Activated B cell treated with CpG ODN at 0.5 μM for 24 hours (primary cell): ENCODE measurements at regions of chr1 and their contacts with region 1.

Region 1: DNA sequence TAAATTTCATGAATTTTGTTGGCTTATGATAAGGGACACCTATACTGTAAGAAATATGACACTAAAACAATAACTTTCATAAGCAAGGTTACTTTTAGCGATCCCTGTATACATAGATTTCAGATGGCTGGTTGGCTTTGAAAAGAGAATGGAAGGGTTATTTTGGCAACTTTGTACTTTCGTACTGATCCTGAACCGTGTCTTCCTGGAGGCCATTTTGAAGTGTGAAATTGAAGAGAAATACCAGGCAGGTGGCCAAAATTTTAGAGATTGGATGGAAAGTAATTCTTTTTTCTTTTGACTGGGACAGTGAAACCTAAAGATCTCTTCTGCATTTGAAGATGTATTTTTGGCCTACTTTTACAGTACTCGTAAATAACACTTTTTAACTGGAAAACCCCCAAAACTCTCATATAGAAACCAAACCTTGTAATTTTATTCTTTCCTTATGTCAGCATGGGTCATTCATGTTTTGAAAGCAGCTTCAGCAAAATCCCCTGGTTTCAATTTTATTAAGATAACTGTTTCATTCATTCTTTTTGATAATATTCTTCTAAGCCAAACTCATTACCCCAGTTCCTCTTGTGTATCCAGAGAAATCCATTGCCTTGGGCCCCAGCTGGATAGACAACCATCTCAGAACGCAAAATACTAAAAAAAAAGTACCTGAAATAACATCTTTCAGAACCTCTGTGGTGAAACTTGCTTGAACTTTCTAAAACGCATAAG is 38.4 kb upstream of the ZNF281 start:
- DNase-seq: no peak
- ATAC-seq: peak; percentile 77
- H3K4me3 Mint-ChIP-seq: peak overlapping the region; percentile 49
- H3K27ac Mint-ChIP-seq: peak overlapping the region; percentile 87
- H3K4me1 Mint-ChIP-seq: peaks cover 24% of the 10 kb centered on the region
- H3K27me3 Mint-ChIP-seq: no peaks in the 10 kb centered on the region
- CTCF ChIP-seq: no peak

Region 2: DNA sequence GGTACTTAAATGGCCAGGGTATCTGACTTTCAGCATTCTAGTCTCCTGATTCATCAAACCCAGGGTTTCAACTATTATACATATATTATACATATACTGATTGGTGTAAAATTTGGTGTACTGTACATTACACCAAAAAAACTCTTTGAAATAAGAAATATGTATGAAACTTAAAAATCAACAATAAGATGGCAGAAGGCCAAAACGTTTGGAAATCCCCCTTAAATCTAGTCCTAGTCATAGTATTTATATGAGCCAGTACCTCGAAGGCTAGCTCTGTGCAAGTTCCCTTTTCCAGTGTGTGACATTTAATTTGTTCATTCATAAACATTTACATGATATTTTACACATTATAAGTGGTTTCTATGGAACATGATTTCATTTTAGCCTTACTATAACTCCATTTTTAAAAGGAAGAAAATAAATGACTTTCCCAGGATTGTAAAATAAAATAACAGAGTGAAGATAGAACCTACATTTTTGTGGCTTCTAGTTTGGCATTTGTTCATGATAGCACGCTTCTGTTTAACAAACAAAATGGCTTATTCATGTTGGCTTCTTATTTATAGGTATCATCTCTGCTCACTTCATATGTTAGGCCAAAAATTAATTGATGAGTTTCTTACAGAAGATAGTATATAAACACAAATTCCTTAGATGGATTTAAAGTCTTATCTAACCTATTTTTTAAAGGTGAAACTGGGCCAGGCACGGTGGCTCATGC is 19.6 kb before region 1 on chr1:
- CTCF ChIA-PET with region 1: no interaction called
- POLR2A ChIA-PET with region 1: no interaction called
- intact Hi-C with region 1: loop called (anchors 2 kb)
- DNase-seq: no peak
- ATAC-seq: peak; percentile 64
- H3K4me3 Mint-ChIP-seq: no peak overlapping the region
- H3K27ac Mint-ChIP-seq: no peak overlapping the region
- H3K4me1 Mint-ChIP-seq: peaks cover 8% of the 10 kb centered on the region
- H3K27me3 Mint-ChIP-seq: no peaks in the 10 kb centered on the region
- CTCF ChIP-seq: no peak